Esophagus squamous epithelium (tissue), 5 donors: ENCODE measurements at regions of chrX and their contacts with region 1.

Region 1: GRCh38 chrX:118807151-118808017 is 16.2 kb upstream of the ZCCHC12 start:
- DNase-seq: no peak
- H3K4me3 ChIP-seq: no peak overlapping the region
- H3K27ac ChIP-seq: no peak overlapping the region
- H3K4me1 ChIP-seq: no peaks in the 10 kb centered on the region
- H3K27me3 ChIP-seq: no peaks in the 10 kb centered on the region
- CTCF ChIP-seq: peak in 5 of 6 experiments; percentile 52 to 69 (median 59)
- POLR2A ChIP-seq: no peak

Region 2: GRCh38 chrX:118637997-118638396 is 169.4 kb before region 1 on chrX:
- intact Hi-C with region 1: loop called (anchors 10 kb)
- DNase-seq: no peak
- H3K4me3 ChIP-seq: no peak overlapping the region
- H3K27ac ChIP-seq: no peak overlapping the region
- H3K4me1 ChIP-seq: no peaks in the 10 kb centered on the region
- H3K27me3 ChIP-seq: no peaks in the 10 kb centered on the region
- CTCF ChIP-seq: peak in 2 of 6 experiments; percentile 9 to 29
- POLR2A ChIP-seq: no peak